K562 (cell line): ENCODE measurements at regions of chr11 and their contacts with region 1.

Region 1: DNA sequence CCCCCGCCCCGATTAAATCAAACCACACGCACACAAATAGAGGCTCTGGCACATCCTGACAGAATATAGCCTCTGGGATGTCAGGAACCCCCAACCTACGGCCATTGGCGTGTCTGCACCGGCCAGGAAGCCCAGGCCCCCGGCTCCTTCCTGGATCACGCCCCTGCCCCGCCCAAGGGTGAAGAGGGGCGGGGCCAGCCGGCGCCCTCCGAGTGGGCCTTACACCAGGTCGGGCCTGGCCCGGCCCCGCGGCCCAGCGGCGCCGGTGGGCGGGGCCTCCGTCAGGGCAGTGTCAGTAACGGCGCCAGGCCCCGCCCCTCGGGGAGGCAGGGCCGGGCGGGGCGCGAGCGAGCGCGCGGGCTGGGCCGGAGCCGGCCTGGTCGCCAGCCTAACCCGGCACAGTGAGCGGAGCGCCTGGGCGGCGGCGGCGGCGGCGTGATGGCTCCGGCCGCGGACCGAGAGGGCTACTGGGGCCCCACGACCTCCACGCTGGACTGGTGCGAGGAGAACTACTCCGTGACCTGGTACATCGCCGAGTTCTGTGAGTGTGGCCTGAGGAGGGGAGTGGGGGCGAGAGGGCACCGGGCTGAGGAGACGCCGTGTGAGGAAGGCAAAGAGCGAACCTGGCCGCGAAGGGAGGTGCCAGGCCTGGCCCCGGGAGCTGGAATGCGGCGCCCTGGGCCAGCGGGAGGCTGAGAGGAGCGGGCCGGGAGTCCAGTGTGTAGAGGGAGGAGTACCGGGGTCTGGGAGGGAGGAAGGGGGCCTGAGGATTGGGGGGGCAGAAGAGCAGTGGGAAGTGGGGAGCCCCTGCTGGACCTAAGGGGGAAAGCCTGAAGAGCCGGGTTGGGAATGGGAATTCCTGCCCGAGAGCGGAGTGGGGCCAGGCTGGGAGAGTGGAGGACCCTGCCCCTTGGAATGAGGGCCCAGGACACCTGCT is at the start of gene ACER3:
- DNase-seq: peak; percentile 96 to 99 (median 99)
- ATAC-seq: peak; percentile 97
- H3K4me3 ChIP-seq: peak within 1 kb of the TSS; percentile 94
- H3K27ac ChIP-seq: peak within 1 kb of the TSS; percentile 88
- H3K4me1 ChIP-seq: peaks cover 16 to 23% of the 10 kb centered on the region in 2 experiments; a peak in 4 of 5 replicates
- H3K27me3 ChIP-seq: no peaks in the 10 kb centered on the region
- CTCF ChIP-seq: peak in 1 of 3 experiments; percentile 26; a peak in 1 of 6 replicates
- EP300 ChIP-seq: no peak
- POLR2A ChIP-seq: peak; percentile 83
- RAD21 ChIP-seq: no peak
- polyA plus RNA-seq, gene ACER3: 2.0 to 3.0 TPM

Region 2: GRCh38 chr11:76872959-76873827 is 12.4 kb after region 1 on chr11:
- CTCF ChIA-PET with region 1: no interaction called
- POLR2A ChIA-PET with region 1: interaction called, 12 read pairs
- in situ Hi-C with region 1: no loop called
- intact Hi-C with region 1: no loop called
- DNase-seq: peak in 1 of 4 experiments; percentile 19
- ATAC-seq: peak; percentile 51
- H3K4me3 ChIP-seq: no peak overlapping the region
- H3K27ac ChIP-seq: no peak overlapping the region
- H3K4me1 ChIP-seq: no peaks in the 10 kb centered on the region
- H3K27me3 ChIP-seq: no peaks in the 10 kb centered on the region
- CTCF ChIP-seq: no peak
- EP300 ChIP-seq: no peak
- POLR2A ChIP-seq: no peak
- RAD21 ChIP-seq: no peak